ENCODE measurements at regions of chr4 and their contacts with region 1.

Region 1: DNA sequence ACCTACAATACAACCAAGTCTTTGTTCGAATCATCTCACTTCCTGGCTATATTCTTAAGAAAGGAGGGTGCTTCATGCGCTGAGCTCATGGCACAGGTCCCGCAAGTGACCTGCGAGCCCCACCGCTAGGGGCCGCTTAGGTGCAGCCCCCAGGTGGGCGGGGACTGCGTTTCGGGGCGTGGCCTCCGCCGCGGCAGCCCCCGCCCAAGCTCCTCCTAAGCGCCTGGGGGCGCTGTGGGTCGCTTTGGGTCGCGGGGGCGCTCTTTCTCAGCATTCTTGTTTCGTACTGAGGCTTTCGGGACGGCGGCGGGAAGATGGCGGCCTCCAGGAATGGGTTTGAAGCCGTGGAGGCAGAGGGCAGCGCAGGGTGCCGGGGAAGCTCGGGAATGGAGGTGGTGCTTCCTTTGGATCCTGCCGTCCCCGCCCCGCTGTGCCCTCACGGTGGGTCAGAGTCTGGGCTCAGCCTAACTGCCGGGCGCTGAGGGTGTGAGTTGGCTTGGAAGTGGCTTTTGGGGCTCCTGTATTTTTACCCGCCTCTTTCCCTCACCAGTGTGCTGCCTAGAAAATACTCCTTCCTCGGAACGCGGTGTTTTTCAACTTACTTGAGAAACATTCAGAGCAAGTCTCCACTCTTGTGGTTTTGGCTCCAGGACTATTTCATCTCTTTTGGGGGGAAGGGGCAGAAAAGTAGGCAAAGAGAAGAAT is at the start of gene ZCCHC4:
- DNase-seq: peak; percentile 91
- H3K4me3 Mint-ChIP-seq: peak within 1 kb of the TSS; percentile 99
- H3K27ac Mint-ChIP-seq: peak within 1 kb of the TSS; percentile 88
- H3K4me1 Mint-ChIP-seq: peaks cover 35% of the 10 kb centered on the region
- H3K27me3 Mint-ChIP-seq: peaks cover 2% of the 10 kb centered on the region
- total RNA-seq, gene ZCCHC4: 8.4 TPM

Region 2: GRCh38 chr4:25144870-25145481 is 167.7 kb before region 1 on chr4:
- CTCF ChIA-PET with region 1: interaction called, 13 read pairs
- POLR2A ChIA-PET with region 1: no interaction called
- DNase-seq: no peak
- H3K4me3 Mint-ChIP-seq: no peak overlapping the region
- H3K27ac Mint-ChIP-seq: no peak overlapping the region
- H3K4me1 Mint-ChIP-seq: no peaks in the 10 kb centered on the region
- H3K27me3 Mint-ChIP-seq: no peaks in the 10 kb centered on the region

Region 3: GRCh38 chr4:25234390-25235370 is 78.0 kb before region 1 on chr4:
- CTCF ChIA-PET with region 1: interaction called, 70 read pairs
- POLR2A ChIA-PET with region 1: interaction called, 65 read pairs
- DNase-seq: peak; percentile 48
- H3K4me3 Mint-ChIP-seq: peak overlapping the region; percentile 96
- H3K27ac Mint-ChIP-seq: peak overlapping the region; percentile 97
- H3K4me1 Mint-ChIP-seq: peaks cover 48% of the 10 kb centered on the region
- H3K27me3 Mint-ChIP-seq: no peaks in the 10 kb centered on the region

Region 4: GRCh38 chr4:25271866-25272265 is 40.8 kb before region 1 on chr4:
- CTCF ChIA-PET with region 1: interaction called, 11 read pairs
- POLR2A ChIA-PET with region 1: interaction called, 3 read pairs
- DNase-seq: no peak
- H3K4me3 Mint-ChIP-seq: no peak overlapping the region
- H3K27ac Mint-ChIP-seq: no peak overlapping the region
- H3K4me1 Mint-ChIP-seq: no peaks in the 10 kb centered on the region
- H3K27me3 Mint-ChIP-seq: no peaks in the 10 kb centered on the region

Region 5: GRCh38 chr4:25299480-25300188 is 13.0 kb before region 1 on chr4:
- CTCF ChIA-PET with region 1: interaction called, 20 read pairs
- POLR2A ChIA-PET with region 1: interaction called, 8 read pairs
- DNase-seq: no peak
- H3K4me3 Mint-ChIP-seq: no peak overlapping the region
- H3K27ac Mint-ChIP-seq: no peak overlapping the region
- H3K4me1 Mint-ChIP-seq: peaks cover 8% of the 10 kb centered on the region
- H3K27me3 Mint-ChIP-seq: peaks cover 7% of the 10 kb centered on the region

Region 6: DNA sequence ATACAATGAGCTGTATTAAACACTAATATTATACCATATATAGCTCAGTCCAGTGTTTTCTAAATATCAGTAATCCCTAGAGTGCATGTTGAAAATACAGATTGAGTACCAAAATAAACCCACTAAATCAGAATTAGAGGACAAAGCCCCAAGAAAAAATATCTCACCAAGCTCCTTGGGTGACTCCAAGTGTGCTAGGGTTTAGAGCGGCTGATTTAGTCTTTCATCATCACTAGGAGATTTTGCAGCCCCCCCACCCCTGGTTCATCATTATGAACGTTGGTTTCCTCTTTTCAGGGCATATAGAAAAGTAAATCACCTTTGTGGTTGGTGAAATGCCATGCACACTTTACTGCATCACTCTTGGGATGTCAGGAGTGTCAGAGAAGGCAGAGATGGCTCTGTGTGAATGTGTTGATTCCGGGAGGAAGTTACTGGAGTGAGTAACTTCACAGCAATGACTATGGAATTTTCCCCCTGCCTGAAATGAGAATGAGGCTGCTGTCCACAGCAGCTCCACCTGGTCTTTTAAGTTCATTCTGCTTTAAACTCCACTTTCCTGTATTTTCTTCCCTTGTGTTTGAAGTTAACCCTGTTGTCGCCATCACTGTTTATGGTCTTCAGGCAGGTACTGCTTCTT is 39.2 kb after region 1 on chr4:
- CTCF ChIA-PET with region 1: interaction called, 12 read pairs
- POLR2A ChIA-PET with region 1: interaction called, 3 read pairs
- DNase-seq: no peak
- H3K4me3 Mint-ChIP-seq: no peak overlapping the region
- H3K27ac Mint-ChIP-seq: no peak overlapping the region
- H3K4me1 Mint-ChIP-seq: no peaks in the 10 kb centered on the region
- H3K27me3 Mint-ChIP-seq: no peaks in the 10 kb centered on the region

Region 7: GRCh38 chr4:25367004-25367621 is 54.5 kb after region 1 on chr4:
- CTCF ChIA-PET with region 1: interaction called, 75 read pairs
- POLR2A ChIA-PET with region 1: interaction called, 18 read pairs
- DNase-seq: no peak
- H3K4me3 Mint-ChIP-seq: no peak overlapping the region
- H3K27ac Mint-ChIP-seq: no peak overlapping the region
- H3K4me1 Mint-ChIP-seq: no peaks in the 10 kb centered on the region
- H3K27me3 Mint-ChIP-seq: no peaks in the 10 kb centered on the region

Region 8: GRCh38 chr4:25493466-25493865 is 180.8 kb after region 1 on chr4:
- CTCF ChIA-PET with region 1: no interaction called
- POLR2A ChIA-PET with region 1: no interaction called
- DNase-seq: no peak
- H3K4me3 Mint-ChIP-seq: no peak overlapping the region
- H3K27ac Mint-ChIP-seq: no peak overlapping the region
- H3K4me1 Mint-ChIP-seq: no peaks in the 10 kb centered on the region
- H3K27me3 Mint-ChIP-seq: peaks cover 1% of the 10 kb centered on the region